ENCODE measurements at regions of chr10 and their contacts with region 1.

Region 1: DNA sequence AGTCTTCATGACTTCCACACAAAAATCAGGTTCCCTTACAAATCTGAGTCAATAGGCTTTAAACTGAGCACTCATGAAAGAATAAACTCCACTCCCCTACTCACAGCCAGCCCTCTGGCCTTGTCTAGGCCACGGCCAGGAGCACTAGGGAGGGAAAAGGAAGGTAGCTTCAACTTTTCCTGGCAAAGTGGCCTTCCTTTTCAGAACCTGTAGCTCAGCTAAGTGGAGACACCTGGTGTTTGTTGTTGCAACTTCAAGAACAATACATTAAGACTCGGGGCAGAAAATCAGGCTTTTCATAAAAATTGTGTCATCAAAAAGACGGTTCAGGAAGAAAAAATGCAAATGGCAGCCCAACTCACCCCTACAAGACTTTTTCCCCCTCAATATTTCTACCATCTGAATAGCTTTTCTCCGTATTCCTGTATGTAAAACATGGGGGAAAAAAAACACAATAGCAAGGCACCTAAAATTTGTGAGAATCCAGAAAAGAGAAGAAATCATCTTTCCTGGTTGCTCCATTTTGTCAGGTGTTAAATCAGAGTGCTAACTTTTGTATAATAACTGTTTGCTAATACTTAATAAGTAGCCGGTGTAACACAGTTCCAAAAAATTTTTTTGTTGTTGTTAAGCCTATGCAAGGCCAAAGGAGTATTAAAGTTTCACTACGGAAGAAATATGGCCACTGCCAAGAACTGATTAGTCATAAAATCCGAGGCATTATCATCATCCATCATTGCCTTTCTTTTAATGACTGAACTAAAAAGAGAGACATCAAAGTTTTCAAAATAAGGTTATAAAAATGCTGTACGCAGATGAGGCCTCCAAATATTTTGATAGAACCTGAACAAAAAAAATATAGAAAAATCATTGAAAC is 66.2 kb upstream of the ARID5B start:
- DNase-seq: peak; percentile 58
- H3K4me3 Mint-ChIP-seq: no peak overlapping the region
- H3K27ac Mint-ChIP-seq: peak overlapping the region; percentile 28
- H3K4me1 Mint-ChIP-seq: peaks cover 51% of the 10 kb centered on the region
- H3K27me3 Mint-ChIP-seq: peaks cover 13% of the 10 kb centered on the region
- CTCF ChIP-seq: peak; percentile 61

Region 2: GRCh38 chr10:61140765-61141392 is 694.4 kb before region 1 on chr10:
- CTCF ChIA-PET with region 1: no interaction called
- intact Hi-C with region 1: loop called (anchors 5 kb)
- DNase-seq: peak; percentile 26
- H3K4me3 Mint-ChIP-seq: no peak overlapping the region
- H3K27ac Mint-ChIP-seq: no peak overlapping the region
- H3K4me1 Mint-ChIP-seq: peaks cover 14% of the 10 kb centered on the region
- H3K27me3 Mint-ChIP-seq: no peaks in the 10 kb centered on the region
- CTCF ChIP-seq: peak; percentile 51

Region 3: DNA sequence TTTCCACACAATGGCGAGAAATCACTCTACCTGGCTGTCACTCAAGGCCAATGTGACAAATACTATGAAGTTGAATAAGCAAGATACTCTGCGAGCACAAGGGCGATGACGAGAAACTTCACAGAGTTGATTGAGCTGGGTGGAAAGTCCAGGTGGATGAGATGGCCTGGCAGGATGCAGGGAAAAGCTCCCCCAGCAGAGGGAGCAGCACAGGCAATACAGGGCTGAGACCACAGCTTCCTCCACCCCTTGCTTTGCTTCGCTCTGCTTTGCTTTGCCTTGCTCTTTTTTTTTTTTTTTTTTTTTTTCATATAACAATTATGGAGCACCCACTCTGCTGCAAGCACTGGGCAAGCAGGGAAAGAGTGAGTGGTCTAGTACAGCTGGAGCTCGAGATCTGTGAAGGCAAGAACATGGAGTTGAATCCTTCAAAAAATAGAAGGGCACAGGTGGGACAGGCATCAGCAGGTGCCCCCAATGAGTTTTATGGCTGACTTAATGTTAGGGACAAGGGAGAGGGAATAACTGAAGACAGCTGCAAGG is 84.3 kb before region 1 on chr10:
- CTCF ChIA-PET with region 1: interaction called, 50 read pairs
- intact Hi-C with region 1: loop called (anchors 1 kb)
- DNase-seq: peak; percentile 90
- H3K4me3 Mint-ChIP-seq: peak overlapping the region; percentile 58
- H3K27ac Mint-ChIP-seq: peak overlapping the region; percentile 96
- H3K4me1 Mint-ChIP-seq: peaks cover 54% of the 10 kb centered on the region
- H3K27me3 Mint-ChIP-seq: no peaks in the 10 kb centered on the region
- CTCF ChIP-seq: peak; percentile 85

Region 4: DNA sequence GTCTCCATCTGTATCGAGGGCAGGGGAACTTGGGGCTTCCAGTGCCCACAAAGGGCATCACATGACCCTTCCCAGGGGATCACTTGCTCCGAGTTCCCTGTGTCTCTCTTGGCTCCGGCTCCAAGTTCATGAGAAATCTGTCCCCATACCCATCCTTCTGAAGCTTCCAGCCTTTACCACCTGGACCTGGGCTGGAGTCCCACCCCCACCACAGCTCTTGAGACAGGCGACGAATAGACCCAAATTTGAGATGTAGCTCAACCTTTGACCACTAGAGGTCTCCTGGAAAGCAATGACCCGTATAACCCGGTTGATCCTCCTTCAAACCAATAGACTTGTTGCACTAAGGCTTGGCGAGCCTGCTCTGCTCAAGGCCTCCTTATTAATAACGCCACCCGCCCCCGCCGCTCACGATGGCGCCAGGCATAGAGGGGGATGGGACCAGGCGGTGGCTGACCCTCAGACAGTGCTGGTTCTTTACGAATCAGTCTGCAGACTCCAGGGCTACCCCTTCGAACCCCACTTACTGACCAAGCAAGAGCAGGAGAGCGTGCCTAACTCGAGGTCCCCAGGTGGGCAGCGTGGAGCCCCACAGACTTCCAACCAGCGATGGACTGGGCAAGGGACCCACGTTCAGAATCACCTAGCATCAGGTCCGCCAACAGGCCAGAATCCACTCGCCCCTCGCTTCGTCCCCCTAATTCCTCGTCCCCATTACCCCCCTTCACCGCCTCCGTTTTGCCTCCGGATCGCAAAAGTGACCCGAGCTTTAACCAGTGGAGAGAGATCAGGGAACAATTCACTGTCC is 61.8 kb after region 1 on chr10:
- CTCF ChIA-PET with region 1: interaction called, 5 read pairs
- intact Hi-C with region 1: loop called (anchors 2 kb)
- DNase-seq: peak; percentile 71
- H3K4me3 Mint-ChIP-seq: peak overlapping the region; percentile 42
- H3K27ac Mint-ChIP-seq: no peak overlapping the region
- H3K4me1 Mint-ChIP-seq: peaks cover 37% of the 10 kb centered on the region
- H3K27me3 Mint-ChIP-seq: no peaks in the 10 kb centered on the region
- CTCF ChIP-seq: peak; percentile 75

Region 5: GRCh38 chr10:62038609-62039190 is 203.4 kb after region 1 on chr10:
- CTCF ChIA-PET with region 1: interaction called, 4 read pairs
- intact Hi-C with region 1: loop called (anchors 2 kb)
- DNase-seq: peak; percentile 81
- H3K4me3 Mint-ChIP-seq: peak overlapping the region; percentile 7
- H3K27ac Mint-ChIP-seq: peak overlapping the region; percentile 56
- H3K4me1 Mint-ChIP-seq: peaks cover 60% of the 10 kb centered on the region
- H3K27me3 Mint-ChIP-seq: no peaks in the 10 kb centered on the region
- CTCF ChIP-seq: peak; percentile 76

Region 6: GRCh38 chr10:62250594-62251198 is 415.4 kb after region 1 on chr10:
- CTCF ChIA-PET with region 1: no interaction called
- intact Hi-C with region 1: loop called (anchors 5 kb)
- DNase-seq: peak; percentile 48
- H3K4me3 Mint-ChIP-seq: no peak overlapping the region
- H3K27ac Mint-ChIP-seq: peak overlapping the region; percentile 21
- H3K4me1 Mint-ChIP-seq: peaks cover 41% of the 10 kb centered on the region
- H3K27me3 Mint-ChIP-seq: no peaks in the 10 kb centered on the region
- CTCF ChIP-seq: no peak

Region 7: DNA sequence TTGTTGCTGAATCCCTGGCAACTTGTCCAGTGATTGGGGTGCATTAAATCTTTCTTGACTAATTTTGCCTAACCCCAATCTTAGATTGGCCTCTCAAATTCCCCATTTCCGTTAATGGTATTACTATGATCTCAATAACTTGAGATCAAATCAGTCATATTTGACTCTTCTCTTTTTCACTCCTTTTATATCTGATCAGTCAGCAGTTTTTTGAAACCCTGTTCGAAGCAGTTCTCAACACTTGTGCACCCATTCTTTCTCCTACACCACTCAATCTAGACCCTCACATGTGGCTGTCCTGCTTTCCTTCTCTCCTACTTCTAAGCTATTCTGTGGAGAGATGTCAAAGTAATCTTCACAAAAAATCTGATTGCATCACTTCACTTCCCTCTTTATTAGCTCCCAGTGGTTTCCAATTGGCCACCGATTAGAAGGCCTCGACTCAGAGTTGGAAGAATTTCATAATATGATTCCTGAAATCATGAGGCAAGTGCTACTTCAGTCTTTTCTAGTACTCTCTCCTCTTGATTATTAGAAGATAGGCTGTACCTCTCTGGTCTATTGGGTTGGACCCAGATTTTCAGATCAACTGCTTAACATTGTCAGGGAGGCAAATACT is 667.8 kb after region 1 on chr10:
- CTCF ChIA-PET with region 1: no interaction called
- intact Hi-C with region 1: no loop called
- DNase-seq: no peak
- H3K4me3 Mint-ChIP-seq: no peak overlapping the region
- H3K27ac Mint-ChIP-seq: no peak overlapping the region
- H3K4me1 Mint-ChIP-seq: no peaks in the 10 kb centered on the region
- H3K27me3 Mint-ChIP-seq: no peaks in the 10 kb centered on the region
- CTCF ChIP-seq: no peak